Right cardiac atrium (tissue), 5 donors: ENCODE measurements at regions of chr10 and their contacts with region 1.

Region 1: DNA sequence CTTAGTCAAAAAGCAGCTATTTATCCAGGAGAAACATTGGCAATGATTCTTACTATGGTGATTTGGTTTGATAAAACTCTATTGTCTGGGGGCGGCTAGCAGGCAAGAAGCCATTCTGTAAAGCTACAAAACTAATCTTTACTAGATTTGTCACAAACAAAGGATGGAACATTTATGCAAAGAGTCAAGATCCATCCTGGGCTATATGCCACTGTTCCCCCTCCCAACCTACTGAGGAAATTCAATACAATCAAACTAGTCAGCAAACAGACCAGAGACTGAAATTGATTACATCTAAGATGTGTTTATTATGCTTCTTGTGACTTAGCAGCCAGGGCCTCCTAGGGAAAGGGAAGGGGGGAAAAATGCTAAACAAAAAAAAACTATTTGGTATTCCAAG is 397.6 kb downstream of the GPAM start:
- DNase-seq: no peak
- ATAC-seq: no peak
- H3K4me3 ChIP-seq: no peak overlapping the region
- H3K27ac ChIP-seq: no peak overlapping the region
- H3K4me1 ChIP-seq: no peaks in the 10 kb centered on the region
- H3K27me3 ChIP-seq: no peaks in the 10 kb centered on the region

Region 2: GRCh38 chr10:111824128-111824527 is 38.2 kb after region 1 on chr10:
- intact Hi-C with region 1: loop called in 1 of 4 experiments (anchors 2 kb)
- DNase-seq: no peak
- ATAC-seq: no peak
- H3K4me3 ChIP-seq: no peak overlapping the region
- H3K27ac ChIP-seq: no peak overlapping the region
- H3K4me1 ChIP-seq: no peaks in the 10 kb centered on the region
- H3K27me3 ChIP-seq: no peaks in the 10 kb centered on the region